ENCODE measurements at regions of chr5 and their contacts with region 1.

Region 1: DNA sequence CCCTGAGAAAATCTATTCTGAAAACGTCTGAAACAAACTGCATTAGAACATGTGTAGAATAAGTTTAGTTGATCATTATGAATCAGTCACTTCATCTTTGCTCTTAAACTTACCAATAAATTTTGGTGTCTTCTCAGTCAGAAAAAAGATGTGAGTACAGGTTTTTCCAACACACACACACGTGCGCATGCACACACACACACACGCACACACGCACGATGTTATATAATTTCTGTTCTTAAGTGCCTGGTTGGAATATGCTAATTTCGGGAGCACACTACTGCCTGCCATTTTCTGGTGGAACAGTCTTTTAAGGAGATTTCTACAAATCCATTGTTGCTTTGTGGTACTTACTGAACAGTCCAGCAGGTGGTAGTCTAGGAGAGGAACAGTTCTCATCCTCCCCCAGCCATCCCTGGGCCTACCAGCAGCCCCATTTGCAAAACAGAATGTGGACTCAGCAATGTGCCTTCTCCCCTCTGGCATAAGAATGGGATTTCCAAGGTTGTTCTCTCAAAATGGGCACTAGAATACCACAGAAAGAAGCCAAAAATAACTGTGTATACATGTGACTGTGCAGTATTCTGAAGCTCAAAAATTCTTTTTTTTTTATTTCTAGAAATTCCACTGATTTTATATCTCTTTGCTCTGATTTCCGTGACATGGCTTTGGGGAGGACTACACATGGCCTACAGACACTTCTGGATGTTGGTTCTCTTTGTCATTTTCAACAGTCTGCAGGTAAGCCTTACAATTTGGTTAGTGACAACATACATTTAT is 281.3 kb downstream of the ARRDC3 start:
- DNase-seq: peak; percentile 70 to 83 (median 73)
- ATAC-seq: peak; percentile 91 to 98 (median 96)
- H3K4me3 ChIP-seq: no peak overlapping the region
- H3K27ac ChIP-seq: no peak overlapping the region
- H3K4me1 ChIP-seq: peaks cover 0 to 10% (median 0%) of the 10 kb centered on the region in 12 donors
- H3K27me3 ChIP-seq: no peaks in the 10 kb centered on the region
- CTCF ChIP-seq: peak; percentile 63 to 88 (median 78)
- POLR2A ChIP-seq: no peak

Region 2: GRCh38 chr5:90873033-90873517 is 228.7 kb before region 1 on chr5:
- intact Hi-C with region 1: loop called (anchors 5 to 10 kb)
- DNase-seq: no peak
- ATAC-seq: peak in 3 of 4 donors; percentile 54 to 80 (median 74)
- H3K4me3 ChIP-seq: no peak overlapping the region
- H3K27ac ChIP-seq: no peak overlapping the region
- H3K4me1 ChIP-seq: peaks cover 0 to 20% (median 3%) of the 10 kb centered on the region in 12 donors
- H3K27me3 ChIP-seq: no peaks in the 10 kb centered on the region
- CTCF ChIP-seq: no peak
- POLR2A ChIP-seq: no peak

Region 3: DNA sequence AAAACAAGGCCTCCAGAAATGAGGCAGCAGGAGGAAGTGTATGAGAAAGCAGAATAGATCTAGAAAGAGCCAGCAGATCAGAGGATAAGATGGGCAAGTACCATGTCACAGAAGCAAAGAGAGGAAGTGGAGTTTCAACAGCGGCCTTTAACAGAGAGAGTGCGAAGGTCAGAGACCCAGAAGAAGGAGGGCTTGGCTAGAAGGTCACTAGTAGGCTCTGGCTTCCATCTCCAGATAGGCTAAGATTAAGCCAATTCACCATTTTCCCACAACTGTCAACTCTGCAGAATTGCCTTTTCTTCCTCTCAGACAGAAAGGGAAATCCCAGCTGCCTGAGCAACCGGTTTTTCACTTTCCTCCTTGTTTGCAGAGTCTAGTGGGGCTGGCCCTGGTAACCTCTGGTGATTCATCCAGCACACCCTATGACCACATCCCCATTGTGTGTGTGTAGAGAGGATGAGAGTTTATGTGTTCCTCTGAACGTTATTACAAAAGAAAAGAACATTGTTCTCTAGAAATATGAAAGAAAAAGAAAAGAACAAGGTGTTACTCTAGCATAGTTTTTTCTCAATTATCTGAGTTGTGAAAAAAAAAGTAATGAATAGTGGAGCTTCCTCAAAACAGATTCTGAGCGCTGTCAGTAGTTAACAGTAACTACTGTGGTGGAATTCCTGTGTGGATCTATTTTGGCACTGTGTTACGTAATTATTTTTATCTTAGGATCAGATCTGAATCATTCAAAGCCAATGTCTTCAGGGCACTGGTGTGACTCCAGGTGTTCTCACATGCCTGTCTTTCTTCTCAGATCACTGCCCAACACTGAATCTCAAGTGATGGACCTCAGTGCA is 61.0 kb after region 1 on chr5:
- intact Hi-C with region 1: loop called in 1 of 10 experiments (anchors 10 kb)
- DNase-seq: peak in 4 of 5 donors; percentile 53 to 72 (median 65)
- ATAC-seq: peak; percentile 89 to 99 (median 98)
- H3K4me3 ChIP-seq: no peak overlapping the region
- H3K27ac ChIP-seq: peak overlapping the region; percentile 0 to 88 (median 46)
- H3K4me1 ChIP-seq: peaks cover 0 to 34% (median 2%) of the 10 kb centered on the region in 12 donors
- H3K27me3 ChIP-seq: no peaks in the 10 kb centered on the region
- CTCF ChIP-seq: no peak
- POLR2A ChIP-seq: no peak

Region 4: GRCh38 chr5:91225848-91226686 is 124.3 kb after region 1 on chr5:
- intact Hi-C with region 1: loop called in 5 of 10 experiments (anchors 5 to 10 kb)
- DNase-seq: peak in 2 of 5 donors; percentile 26 to 36
- ATAC-seq: peak in 2 of 4 donors; percentile 20 to 59
- H3K4me3 ChIP-seq: no peak overlapping the region
- H3K27ac ChIP-seq: no peak overlapping the region
- H3K4me1 ChIP-seq: peaks cover 0 to 10% (median 0%) of the 10 kb centered on the region in 12 donors
- H3K27me3 ChIP-seq: no peaks in the 10 kb centered on the region
- CTCF ChIP-seq: peak in 11 of 12 donors; percentile 9 to 53 (median 33)
- POLR2A ChIP-seq: no peak

Region 5: DNA sequence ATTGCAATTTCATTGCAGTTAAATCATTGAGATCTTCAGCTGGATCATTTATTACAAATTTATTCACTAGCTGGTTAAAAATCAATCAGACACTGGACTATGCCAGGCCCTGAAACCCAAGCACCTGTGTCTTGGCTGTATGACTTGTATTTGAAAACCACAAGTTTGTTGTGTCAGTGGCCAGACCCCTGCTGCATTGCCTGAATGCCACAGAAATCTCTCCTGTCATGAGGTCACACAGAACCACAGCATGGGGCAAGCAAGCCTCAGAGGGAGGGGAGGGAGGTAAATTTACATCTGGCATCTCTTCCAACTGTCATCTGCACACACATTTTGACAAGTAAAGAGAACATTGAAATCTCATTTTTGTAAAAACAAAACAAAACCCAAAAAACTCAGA is 191.3 kb after region 1 on chr5:
- intact Hi-C with region 1: loop called in 4 of 10 experiments (anchors 10 kb)
- DNase-seq: no peak
- ATAC-seq: no peak
- H3K4me3 ChIP-seq: no peak overlapping the region
- H3K27ac ChIP-seq: no peak overlapping the region
- H3K4me1 ChIP-seq: peaks cover 0 to 21% (median 7%) of the 10 kb centered on the region in 12 donors
- H3K27me3 ChIP-seq: no peaks in the 10 kb centered on the region
- CTCF ChIP-seq: no peak
- POLR2A ChIP-seq: no peak

Region 6: GRCh38 chr5:91419571-91420537 is 318.1 kb after region 1 on chr5:
- intact Hi-C with region 1: loop called in 3 of 10 experiments (anchors 1 to 10 kb)
- DNase-seq: peak in 4 of 5 donors; percentile 36 to 57 (median 46)
- ATAC-seq: no peak
- H3K4me3 ChIP-seq: no peak overlapping the region
- H3K27ac ChIP-seq: no peak overlapping the region
- H3K4me1 ChIP-seq: no peaks in the 10 kb centered on the region
- H3K27me3 ChIP-seq: no peaks in the 10 kb centered on the region
- CTCF ChIP-seq: peak; percentile 69 to 95 (median 83)
- POLR2A ChIP-seq: no peak

Measured in heart left ventricle (tissue), 16 donors.